ENCODE measurements at regions of chr4 and their contacts with region 1.

Region 1: GRCh38 chr4:122542411-122543236 is 78.2 kb downstream of the IL21 start:
- DNase-seq: no peak
- ATAC-seq: no peak
- H3K4me3 ChIP-seq: no peak overlapping the region
- H3K27ac ChIP-seq: no peak overlapping the region
- H3K4me1 ChIP-seq: no peaks in the 10 kb centered on the region
- H3K27me3 ChIP-seq: no peaks in the 10 kb centered on the region
- CTCF ChIP-seq: no peak

Region 2: DNA sequence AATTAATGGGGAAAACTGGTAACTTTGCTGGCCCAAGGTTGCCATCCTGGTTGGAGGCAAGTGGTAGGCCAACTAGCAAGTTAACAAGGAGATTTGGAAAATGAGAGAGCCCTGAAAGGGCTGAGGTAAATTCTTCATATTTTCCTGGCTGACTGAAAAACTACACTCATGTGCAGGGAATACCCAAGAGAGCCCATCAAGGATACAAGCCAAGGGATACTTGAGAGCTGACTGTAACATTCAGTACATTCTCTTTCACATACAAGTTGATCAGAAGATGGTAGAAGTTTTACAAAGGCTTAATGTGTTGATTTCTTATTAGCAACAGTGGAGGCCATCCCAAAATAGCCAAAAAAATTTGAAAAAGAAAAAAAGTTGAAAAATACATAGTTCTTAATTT is 119.4 kb before region 1 on chr4:
- CTCF ChIA-PET with region 1: no interaction called
- POLR2A ChIA-PET with region 1: interaction called, 12 read pairs
- in situ Hi-C with region 1: no loop called
- intact Hi-C with region 1: no loop called
- DNase-seq: no peak
- ATAC-seq: no peak
- H3K4me3 ChIP-seq: no peak overlapping the region
- H3K27ac ChIP-seq: no peak overlapping the region
- H3K4me1 ChIP-seq: no peaks in the 10 kb centered on the region
- H3K27me3 ChIP-seq: no peaks in the 10 kb centered on the region
- CTCF ChIP-seq: no peak